HEK293 (cell line): ENCODE measurements at regions of chr7 and their contacts with region 1.

Region 1: GRCh38 chr7:114426382-114427223 is 12.0 kb downstream of the FOXP2 start:
- H3K4me3 ChIP-seq: no peak overlapping the region
- H3K27ac ChIP-seq: no peak overlapping the region
- H3K4me1 ChIP-seq: no peaks in the 10 kb centered on the region
- CTCF ChIP-seq: no peak

Region 2: DNA sequence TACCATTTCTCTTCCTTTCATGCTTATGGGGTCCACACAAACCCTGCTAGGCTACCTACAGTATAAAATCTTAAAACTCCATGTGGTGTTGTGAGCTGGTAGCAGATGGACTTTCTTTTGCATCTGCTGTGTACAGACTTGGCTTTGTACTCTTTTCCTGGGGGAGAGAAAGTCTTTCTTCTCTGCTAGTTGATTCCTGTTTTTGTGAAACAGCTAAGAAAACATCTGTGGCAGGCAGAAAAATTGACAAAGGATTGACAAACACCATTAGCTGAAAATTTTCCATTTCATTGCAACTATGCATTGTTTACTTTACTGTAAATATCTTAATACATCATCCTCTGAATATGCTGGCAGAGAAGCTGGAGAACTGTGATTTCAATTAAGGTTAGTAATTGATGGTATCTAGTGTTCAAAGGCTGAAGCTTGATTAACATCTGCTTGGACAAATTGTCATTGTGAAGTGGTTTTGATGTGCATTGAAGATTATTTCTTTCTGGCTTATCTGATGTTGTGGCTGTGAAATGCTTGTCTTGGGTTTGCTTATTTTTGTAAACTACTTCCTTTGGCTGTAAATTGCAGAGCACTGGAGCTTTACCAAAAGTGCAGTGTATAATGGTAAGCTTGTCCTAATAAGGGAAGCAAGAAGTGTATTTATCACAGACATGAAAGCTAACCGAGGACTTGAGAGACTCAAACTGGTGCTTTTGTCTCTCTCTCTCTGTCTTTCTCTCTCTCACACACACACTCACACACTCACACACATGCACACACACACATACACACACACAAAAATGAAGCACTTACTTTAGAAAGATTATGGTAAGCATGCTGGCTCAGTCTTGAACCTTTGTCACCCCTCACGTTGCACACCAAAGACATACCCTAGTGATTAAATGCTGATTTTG is 12.2 kb before region 1 on chr7 and contains the start of gene FOXP2:
- CTCF ChIA-PET with region 1: interaction called, 13 read pairs
- POLR2A ChIA-PET with region 1: no interaction called
- H3K4me3 ChIP-seq: peak within 1 kb of the TSS; percentile 40
- H3K27ac ChIP-seq: peak within 1 kb of the TSS; percentile 90
- H3K4me1 ChIP-seq: peaks cover 27% of the 10 kb centered on the region
- CTCF ChIP-seq: no peak

Region 3: DNA sequence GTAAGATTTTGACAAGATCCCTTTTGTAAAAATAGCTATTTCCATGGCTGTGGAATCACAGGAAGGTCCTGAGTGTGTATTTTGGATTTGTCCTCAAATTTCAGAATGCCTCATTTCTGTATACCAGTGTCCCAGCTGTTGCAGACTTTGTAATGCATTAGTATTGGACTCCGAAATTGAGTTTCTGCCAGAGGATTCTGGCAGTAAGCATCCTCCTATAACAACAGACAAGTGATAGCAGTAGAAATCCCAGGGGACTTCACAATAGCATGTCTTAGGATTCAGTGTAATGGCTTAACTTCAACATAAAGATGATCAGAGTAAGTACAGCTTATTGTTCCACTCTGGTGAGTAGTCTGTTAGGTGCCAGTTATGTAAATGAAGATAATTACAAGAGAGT is 92.6 kb after region 1 on chr7:
- CTCF ChIA-PET with region 1: no interaction called
- POLR2A ChIA-PET with region 1: no interaction called
- H3K4me3 ChIP-seq: no peak overlapping the region
- H3K27ac ChIP-seq: no peak overlapping the region
- H3K4me1 ChIP-seq: no peaks in the 10 kb centered on the region
- CTCF ChIP-seq: no peak